PC-3 (cell line): ENCODE measurements at regions of chr20 and their contacts with region 1.

Region 1: GRCh38 chr20:38926142-38926933 is at the start of gene FAM83D:
- DNase-seq: peak; percentile 99
- ATAC-seq: peak; percentile 89
- H3K4me3 ChIP-seq: peak within 1 kb of the TSS; percentile 95
- H3K27ac ChIP-seq: peak within 1 kb of the TSS; percentile 10; the same call in 1 of the 2 replicates
- H3K4me1 ChIP-seq: peaks cover 38% of the 10 kb centered on the region
- H3K27me3 ChIP-seq: peaks cover 1% of the 10 kb centered on the region; the same call in 1 of the 2 replicates
- CTCF ChIP-seq: 0 out of 2 replicates have a peak, but pooled peaks have one; percentile 10
- total RNA-seq, gene FAM83D: 69.6 and 81.4 TPM in 2 replicates

Region 2: DNA sequence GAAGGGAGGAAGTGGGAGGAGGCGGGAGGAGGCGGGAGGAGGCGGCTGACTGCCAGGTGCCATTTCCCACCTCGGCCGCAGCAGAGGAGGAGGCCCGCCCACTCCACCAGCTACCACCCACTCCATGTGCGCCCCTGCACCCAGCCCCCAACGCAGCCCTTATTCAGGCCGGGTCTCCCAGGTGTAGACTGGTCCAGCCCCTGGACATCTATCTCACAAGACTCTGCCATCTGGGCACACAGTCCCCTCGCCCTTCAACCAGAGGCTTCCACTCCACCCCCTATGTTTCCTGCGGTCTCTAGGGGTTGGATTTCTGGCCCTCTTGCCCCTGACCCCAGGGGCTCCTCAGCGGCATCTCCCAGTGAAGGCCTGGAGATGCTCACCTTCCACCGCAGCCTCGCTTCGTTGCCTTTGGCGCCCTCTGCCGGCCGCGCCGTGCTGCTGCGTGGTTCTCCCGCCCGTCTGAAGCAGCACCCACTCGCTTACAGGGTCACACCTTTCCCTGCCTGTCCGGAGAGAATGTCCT is 32.7 kb before region 1 on chr20:
- CTCF ChIA-PET with region 1: no interaction called
- POLR2A ChIA-PET with region 1: no interaction called
- intact Hi-C with region 1: no loop called
- DNase-seq: peak; percentile 75
- ATAC-seq: peak; percentile 95
- H3K4me3 ChIP-seq: peak overlapping the region; percentile 32; the same call in 1 of the 2 replicates
- H3K27ac ChIP-seq: no peak overlapping the region
- H3K4me1 ChIP-seq: peaks cover 4% of the 10 kb centered on the region; the same call in 1 of the 2 replicates
- H3K27me3 ChIP-seq: peaks cover 14% of the 10 kb centered on the region; the same call in 1 of the 2 replicates
- CTCF ChIP-seq: peak; percentile 83

Region 3: DNA sequence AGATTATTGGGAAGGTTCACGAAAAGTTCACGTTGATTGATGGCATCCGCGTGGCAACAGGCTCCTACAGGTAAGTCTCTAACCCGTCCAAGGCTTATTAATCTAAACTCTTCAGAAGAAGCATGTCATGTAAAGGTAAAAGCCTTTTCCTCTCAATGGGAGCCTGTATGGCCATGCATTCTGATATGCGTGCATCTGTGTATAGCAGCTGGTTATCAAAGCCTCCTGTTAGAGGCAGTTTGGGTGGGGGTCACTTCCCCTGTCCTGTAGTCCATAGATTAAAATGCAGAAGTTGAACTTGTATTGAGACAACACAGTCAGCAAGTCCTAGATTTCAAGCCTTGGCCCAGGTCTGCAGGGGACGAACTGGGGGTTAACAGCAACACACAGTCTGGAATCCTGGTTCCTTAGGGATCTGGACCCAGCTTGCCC is 21.6 kb after region 1 on chr20:
- CTCF ChIA-PET with region 1: no interaction called
- POLR2A ChIA-PET with region 1: interaction called, 27 read pairs
- intact Hi-C with region 1: no loop called
- DNase-seq: no peak
- ATAC-seq: no peak
- H3K4me3 ChIP-seq: no peak overlapping the region
- H3K27ac ChIP-seq: no peak overlapping the region
- H3K4me1 ChIP-seq: no peaks in the 10 kb centered on the region
- H3K27me3 ChIP-seq: no peaks in the 10 kb centered on the region
- CTCF ChIP-seq: no peak

Region 4: DNA sequence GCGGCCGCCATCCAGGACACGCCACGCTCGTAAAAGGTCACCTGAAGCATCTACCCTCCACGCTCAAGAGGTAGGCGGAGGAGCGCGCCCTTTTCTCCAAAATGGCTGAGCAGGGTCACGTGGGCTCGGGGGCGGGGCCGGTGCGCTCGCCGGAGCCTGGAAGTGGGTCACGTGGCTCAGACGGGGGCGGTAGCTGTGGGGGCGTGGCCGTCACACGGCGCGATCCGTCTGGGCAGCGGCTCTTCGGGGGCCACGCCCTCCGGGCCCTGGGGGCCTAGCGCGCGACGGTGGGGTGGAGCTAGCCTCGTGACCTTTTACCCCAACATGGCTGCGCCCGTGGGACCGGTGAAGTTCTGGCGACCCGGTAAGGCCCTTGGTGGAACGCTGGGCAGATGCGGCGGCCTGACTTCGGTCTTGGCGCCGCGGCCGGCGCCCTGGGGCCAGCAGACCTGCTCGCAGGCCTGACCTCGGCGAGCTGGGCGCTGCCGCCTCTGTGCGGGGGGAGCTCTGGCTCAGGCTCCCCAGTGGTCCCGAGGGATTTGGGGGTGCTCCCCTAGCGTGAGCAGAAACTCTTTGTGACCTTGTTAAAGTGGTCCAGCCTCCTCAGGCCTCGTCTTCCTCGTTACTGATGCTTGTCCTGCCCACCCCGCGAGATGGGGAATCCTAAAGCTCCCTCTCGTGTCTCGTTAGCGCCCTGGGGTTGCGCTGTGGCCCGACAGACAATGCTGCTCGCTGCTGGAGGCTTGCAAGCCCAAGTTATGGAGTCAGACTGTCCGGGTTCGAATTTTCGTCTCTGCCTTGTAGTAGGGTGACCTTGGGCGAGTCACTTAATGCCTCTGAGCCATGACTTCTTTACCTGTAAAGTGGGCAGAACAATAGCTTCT is 35.9 kb after region 1 on chr20 and contains the start of gene DHX35:
- CTCF ChIA-PET with region 1: interaction called, 3 read pairs
- POLR2A ChIA-PET with region 1: interaction called, 3 read pairs
- intact Hi-C with region 1: loop called (anchors 1 kb)
- DNase-seq: peak; percentile 97
- ATAC-seq: peak; percentile 99
- H3K4me3 ChIP-seq: peak within 1 kb of the TSS; percentile 91
- H3K27ac ChIP-seq: peak within 1 kb of the TSS; percentile 71
- H3K4me1 ChIP-seq: peaks cover 18% of the 10 kb centered on the region
- H3K27me3 ChIP-seq: no peaks in the 10 kb centered on the region
- CTCF ChIP-seq: peak; percentile 53
- total RNA-seq, gene DHX35: 10.1 and 12.0 TPM in 2 replicates

Region 5: GRCh38 chr20:39019805-39020325 is 93.5 kb after region 1 on chr20:
- CTCF ChIA-PET with region 1: no interaction called
- POLR2A ChIA-PET with region 1: interaction called, 14 read pairs
- intact Hi-C with region 1: no loop called
- DNase-seq: peak; percentile 25
- ATAC-seq: no peak
- H3K4me3 ChIP-seq: no peak overlapping the region
- H3K27ac ChIP-seq: no peak overlapping the region
- H3K4me1 ChIP-seq: no peaks in the 10 kb centered on the region
- H3K27me3 ChIP-seq: no peaks in the 10 kb centered on the region
- CTCF ChIP-seq: no peak

Region 6: DNA sequence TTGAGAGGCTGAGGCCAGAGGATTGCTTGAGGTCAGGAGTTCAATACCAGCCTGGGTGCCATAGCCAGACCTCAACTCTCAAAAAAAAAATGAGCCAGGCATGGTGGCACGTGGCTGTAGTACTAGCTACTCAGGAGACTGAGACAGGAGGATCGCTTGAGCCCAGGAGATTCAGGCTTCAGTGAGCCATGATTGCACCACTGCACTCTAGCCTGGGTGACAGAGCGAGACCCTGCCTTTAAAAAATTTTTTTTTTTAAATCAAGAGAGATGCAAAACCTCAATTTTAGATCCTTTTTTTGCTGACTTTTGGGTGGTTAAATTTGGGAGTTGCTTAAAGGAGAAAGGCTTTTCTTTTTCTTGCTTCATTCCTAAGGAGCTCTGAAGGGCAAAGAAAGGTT is 106.7 kb after region 1 on chr20:
- CTCF ChIA-PET with region 1: no interaction called
- POLR2A ChIA-PET with region 1: no interaction called
- intact Hi-C with region 1: no loop called
- DNase-seq: no peak
- ATAC-seq: no peak
- H3K4me3 ChIP-seq: no peak overlapping the region
- H3K27ac ChIP-seq: no peak overlapping the region
- H3K4me1 ChIP-seq: no peaks in the 10 kb centered on the region
- H3K27me3 ChIP-seq: no peaks in the 10 kb centered on the region
- CTCF ChIP-seq: no peak

Region 7: DNA sequence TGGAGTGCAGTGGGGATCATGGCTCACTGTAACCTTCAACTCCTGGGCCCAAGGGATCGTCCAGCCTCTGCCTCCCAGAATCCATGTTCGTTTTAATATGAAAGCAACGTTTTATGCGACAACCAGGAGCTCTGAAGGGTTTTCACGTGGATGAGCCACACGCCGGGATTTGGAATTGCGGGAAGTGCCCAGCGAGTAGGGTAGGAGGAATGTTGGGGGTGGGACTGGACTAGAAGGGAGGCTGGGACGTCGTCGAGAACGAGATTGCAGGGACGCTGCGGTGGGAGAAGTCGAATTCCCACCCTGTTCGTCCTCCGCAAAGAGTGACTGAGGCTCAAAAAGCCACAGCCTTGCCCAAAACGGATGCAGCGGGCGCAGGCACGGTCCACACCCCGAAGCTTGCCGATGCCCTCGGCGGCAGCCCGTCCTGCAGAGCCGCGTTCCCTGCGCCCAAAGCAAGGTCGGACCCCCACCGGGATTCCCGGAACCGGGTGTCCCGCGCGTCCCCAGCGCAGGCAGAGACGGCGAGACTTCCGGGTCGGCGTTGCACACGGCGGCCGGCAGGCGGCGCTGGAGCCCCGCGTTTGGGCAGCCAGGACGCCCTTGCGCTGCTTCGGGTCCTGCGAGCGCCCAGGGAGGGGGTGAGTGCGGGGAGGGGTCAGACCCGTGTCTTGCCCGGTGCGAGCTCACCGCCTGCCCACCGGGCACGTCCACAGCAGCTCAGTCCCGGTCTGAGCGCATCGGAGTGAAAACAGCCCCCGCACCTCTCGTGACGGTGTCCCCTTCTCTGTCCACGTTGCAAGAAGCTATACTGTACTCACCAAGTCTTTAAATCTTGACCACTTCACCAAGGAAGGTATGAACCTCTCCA is 123.6 kb after region 1 on chr20:
- CTCF ChIA-PET with region 1: interaction called, 6 read pairs
- POLR2A ChIA-PET with region 1: no interaction called
- intact Hi-C with region 1: loop called (anchors 1 kb)
- DNase-seq: peak; percentile 80
- ATAC-seq: peak; percentile 87
- H3K4me3 ChIP-seq: peak overlapping the region; percentile 87
- H3K27ac ChIP-seq: no peak overlapping the region
- H3K4me1 ChIP-seq: 0 out of 2 replicates have a peak, but pooled peaks cover 4% of the 10 kb centered on the region
- H3K27me3 ChIP-seq: no peaks in the 10 kb centered on the region
- CTCF ChIP-seq: peak; percentile 93